ENCODE measurements at regions of chr2 and their contacts with region 1.

Region 1: GRCh38 chr2:235898766-235899165 is 269.4 kb downstream of the GBX2 start:
- DNase-seq: no peak
- ATAC-seq: no peak
- H3K4me3 ChIP-seq: no peak overlapping the region
- H3K27ac ChIP-seq: no peak overlapping the region
- H3K4me1 ChIP-seq: no peaks in the 10 kb centered on the region
- H3K27me3 ChIP-seq: no peaks in the 10 kb centered on the region
- CTCF ChIP-seq: no peak
- POLR2A ChIP-seq: no peak

Region 2: DNA sequence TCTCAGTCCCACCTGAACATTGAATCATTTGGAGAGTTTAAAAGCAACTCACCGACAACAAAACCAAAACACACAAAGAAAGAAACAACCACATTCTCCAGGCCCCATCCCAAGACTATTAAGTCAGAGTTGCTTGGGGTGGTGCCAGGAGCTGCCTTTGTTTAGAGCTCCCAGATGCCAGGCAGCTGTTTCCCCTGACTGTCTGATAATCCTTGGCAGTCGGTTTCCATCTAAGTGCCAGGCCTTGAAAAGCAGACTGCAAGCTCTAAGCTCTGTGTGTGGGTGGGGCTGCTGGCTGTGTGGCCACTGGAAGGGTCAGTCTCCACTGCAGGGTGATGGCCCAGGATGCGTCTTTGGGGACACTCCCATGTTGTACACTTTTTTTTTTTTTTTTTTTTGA is 660.2 kb before region 1 on chr2:
- intact Hi-C with region 1: no loop called
- DNase-seq: peak in 4 of 5 donors; percentile 60 to 85 (median 76)
- ATAC-seq: peak; percentile 10 to 94 (median 92)
- H3K4me3 ChIP-seq: no peak overlapping the region
- H3K27ac ChIP-seq: no peak overlapping the region
- H3K4me1 ChIP-seq: peaks cover 0 to 11% (median 0%) of the 10 kb centered on the region in 12 donors
- H3K27me3 ChIP-seq: peaks cover 0 to 9% (median 0%) of the 10 kb centered on the region in 9 donors
- CTCF ChIP-seq: no peak
- POLR2A ChIP-seq: no peak

Region 3: GRCh38 chr2:236036045-236036444 is 137.3 kb after region 1 on chr2:
- intact Hi-C with region 1: loop called in 1 of 10 experiments (anchors 10 kb)
- DNase-seq: no peak
- ATAC-seq: no peak
- H3K4me3 ChIP-seq: no peak overlapping the region
- H3K27ac ChIP-seq: no peak overlapping the region
- H3K4me1 ChIP-seq: peaks cover 0 to 11% (median 0%) of the 10 kb centered on the region in 12 donors
- H3K27me3 ChIP-seq: no peaks in the 10 kb centered on the region
- CTCF ChIP-seq: no peak
- POLR2A ChIP-seq: no peak